ENCODE measurements at regions of chr13 and their contacts with region 1.

Region 1: DNA sequence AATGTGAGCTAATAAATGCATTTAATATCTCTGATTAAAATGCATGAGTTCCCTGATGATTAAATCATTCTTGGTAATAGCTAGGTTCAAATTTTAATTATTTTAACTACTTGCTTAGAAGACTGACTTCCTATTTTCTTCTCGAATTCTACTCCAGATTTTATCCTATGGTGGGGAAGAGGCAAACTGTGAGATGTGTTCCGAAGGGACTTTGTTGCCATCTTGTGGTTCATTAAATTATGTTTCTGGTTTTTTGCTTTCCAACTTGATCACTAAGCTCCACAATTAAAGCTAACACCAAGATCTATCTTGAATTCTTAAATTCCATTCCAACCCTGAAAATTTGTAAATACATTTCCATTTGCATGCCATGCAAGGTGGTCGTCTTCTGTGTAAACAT is 538.4 kb upstream of the PCDH20 start:
- DNase-seq: peak; percentile 4
- ATAC-seq: peak; percentile 27; the same call in 1 of the 3 replicates
- H3K4me3 ChIP-seq: no peak overlapping the region
- H3K27ac ChIP-seq: no peak overlapping the region
- H3K4me1 ChIP-seq: no peaks in the 10 kb centered on the region
- H3K27me3 ChIP-seq: no peaks in the 10 kb centered on the region
- CTCF ChIP-seq: peak; percentile 38
- EP300 ChIP-seq: no peak
- POLR2A ChIP-seq: no peak
- RAD21 ChIP-seq: no peak

Region 2: DNA sequence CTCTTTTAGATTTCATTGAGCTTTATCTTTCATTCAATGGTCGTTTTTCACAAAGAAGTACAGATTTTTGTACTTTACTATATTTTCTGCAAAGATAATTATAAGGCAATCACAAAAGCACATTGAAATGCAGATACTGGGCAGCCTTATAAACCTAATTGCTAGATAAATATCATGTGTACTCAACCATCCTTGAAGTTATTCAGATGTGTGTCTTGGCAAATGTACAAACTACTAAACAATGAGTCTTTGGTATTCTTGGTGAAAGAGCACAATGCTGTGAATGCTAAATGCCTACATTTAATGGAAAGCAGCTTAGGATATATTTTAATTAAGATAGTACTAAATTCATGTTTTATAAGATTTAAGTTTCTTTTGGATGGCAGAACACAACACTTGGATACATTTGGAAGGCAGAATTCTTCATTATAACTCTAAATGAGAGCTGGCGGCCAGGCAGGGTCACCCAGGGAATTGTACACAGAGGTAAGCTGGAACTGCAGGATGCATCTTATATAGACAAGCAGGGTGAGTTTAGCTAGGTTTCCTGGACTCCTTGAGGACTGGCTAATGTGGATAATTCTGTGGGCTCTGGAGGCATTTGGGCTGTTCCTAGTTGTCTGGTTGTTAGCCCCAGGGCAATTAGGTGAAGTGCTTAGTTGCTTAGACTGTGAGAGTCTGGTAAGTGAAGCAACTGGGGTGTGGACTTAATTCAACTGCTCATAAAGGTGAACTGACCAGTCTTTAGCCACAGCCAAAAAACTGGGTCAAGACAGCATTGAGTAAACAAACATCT is 825.0 kb before region 1 on chr13:
- CTCF ChIA-PET with region 1: no interaction called
- POLR2A ChIA-PET with region 1: no interaction called
- in situ Hi-C with region 1: no loop called
- intact Hi-C with region 1: loop called (anchors 5 kb)
- DNase-seq: no peak
- ATAC-seq: no peak
- H3K4me3 ChIP-seq: no peak overlapping the region
- H3K27ac ChIP-seq: no peak overlapping the region
- H3K4me1 ChIP-seq: no peaks in the 10 kb centered on the region
- H3K27me3 ChIP-seq: no peaks in the 10 kb centered on the region
- CTCF ChIP-seq: no peak
- EP300 ChIP-seq: no peak
- POLR2A ChIP-seq: no peak
- RAD21 ChIP-seq: no peak

Region 3: GRCh38 chr13:61286148-61286745 is 667.8 kb before region 1 on chr13:
- CTCF ChIA-PET with region 1: no interaction called
- POLR2A ChIA-PET with region 1: no interaction called
- in situ Hi-C with region 1: no loop called
- intact Hi-C with region 1: loop called (anchors 2 kb)
- DNase-seq: peak; percentile 2
- ATAC-seq: peak; percentile 84
- H3K4me3 ChIP-seq: no peak overlapping the region
- H3K27ac ChIP-seq: no peak overlapping the region
- H3K4me1 ChIP-seq: no peaks in the 10 kb centered on the region
- H3K27me3 ChIP-seq: no peaks in the 10 kb centered on the region
- CTCF ChIP-seq: peak; percentile 51
- EP300 ChIP-seq: no peak
- POLR2A ChIP-seq: no peak
- RAD21 ChIP-seq: no peak

Region 4: DNA sequence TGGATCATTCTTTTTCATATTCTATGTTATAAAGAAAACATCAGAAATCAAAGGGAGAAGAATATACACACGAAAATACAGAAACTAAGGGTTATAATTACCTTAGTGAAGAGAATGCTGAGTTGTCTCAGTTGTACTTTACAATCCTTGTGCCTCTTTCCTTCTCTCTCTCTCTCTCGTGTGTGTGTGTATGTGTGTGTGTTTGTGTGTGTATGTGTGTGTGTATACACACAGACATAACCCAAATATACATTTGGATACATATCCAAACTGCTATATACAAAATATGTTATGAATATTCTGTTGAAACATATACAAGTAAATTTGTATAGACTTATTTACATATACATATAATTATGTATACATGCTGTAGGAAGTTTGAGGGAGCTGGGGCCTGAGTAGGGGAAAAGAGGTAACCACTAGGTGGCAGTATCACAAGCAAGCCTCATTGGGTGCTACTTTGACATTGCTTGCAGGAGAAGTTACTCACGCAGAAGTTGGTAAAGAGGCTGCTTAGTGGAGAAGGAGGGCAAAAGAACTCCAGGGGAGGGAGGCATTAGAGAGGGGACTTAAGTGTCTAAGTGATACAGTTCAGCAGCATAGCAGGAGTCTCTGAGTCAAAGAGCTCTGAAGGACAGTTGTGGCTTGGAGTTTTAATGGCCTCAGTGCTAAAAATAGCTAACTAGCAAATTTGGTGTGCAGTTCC is 73.4 kb before region 1 on chr13:
- CTCF ChIA-PET with region 1: no interaction called
- POLR2A ChIA-PET with region 1: no interaction called
- in situ Hi-C with region 1: no loop called
- intact Hi-C with region 1: loop called (anchors 1 kb)
- DNase-seq: peak; percentile 21
- ATAC-seq: peak; percentile 94
- H3K4me3 ChIP-seq: no peak overlapping the region
- H3K27ac ChIP-seq: no peak overlapping the region
- H3K4me1 ChIP-seq: no peaks in the 10 kb centered on the region
- H3K27me3 ChIP-seq: no peaks in the 10 kb centered on the region
- CTCF ChIP-seq: peak; percentile 54
- EP300 ChIP-seq: no peak
- POLR2A ChIP-seq: no peak
- RAD21 ChIP-seq: no peak